RWPE1 (cell line): ENCODE measurements at regions of chr3 and their contacts with region 1.

Region 1: DNA sequence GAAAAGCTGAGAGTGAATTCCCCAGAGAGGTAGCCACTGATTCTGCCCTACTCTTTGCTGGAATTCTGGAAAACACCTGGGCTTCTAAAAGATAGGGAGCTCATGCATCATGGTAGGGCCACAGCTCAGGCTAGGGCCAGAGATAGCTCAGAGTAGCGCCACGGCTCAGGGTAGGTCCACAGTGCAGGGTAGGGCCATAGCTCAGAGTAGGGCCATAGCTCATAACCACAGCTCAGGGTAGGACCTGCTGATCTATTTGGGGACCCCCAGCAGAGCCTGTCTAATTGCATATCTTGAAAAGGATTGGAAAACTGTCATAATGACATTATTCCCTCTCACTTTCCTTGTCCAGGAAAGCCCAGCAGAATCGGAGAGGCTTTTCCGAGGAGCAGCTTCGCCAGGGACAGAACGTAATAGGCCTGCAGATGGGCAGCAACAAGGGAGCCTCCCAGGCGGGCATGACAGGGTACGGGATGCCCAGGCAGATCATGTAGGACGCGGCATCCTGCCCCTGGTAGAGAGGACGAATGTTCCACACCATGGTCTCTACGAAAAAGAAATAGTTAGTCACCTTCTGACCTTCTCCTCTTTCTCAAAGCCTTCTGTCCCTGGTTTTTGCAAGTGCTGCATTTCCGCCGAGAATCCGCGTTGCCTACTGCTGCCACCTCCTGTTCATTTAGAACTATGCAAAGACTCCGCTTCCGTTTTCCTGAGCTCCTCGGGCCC is 14.5 kb downstream of the TAGLN3 start:
- DNase-seq: peak; percentile 49
- H3K27ac ChIP-seq: no peak overlapping the region
- CTCF ChIP-seq: peak; percentile 58

Region 2: GRCh38 chr3:111989061-111989678 is 24.1 kb before region 1 on chr3:
- CTCF ChIA-PET with region 1: interaction called, 10 read pairs
- POLR2A ChIA-PET with region 1: no interaction called
- DNase-seq: no peak
- H3K27ac ChIP-seq: no peak overlapping the region
- CTCF ChIP-seq: peak; percentile 78

Region 3: GRCh38 chr3:112128843-112129727 is 115.9 kb after region 1 on chr3:
- CTCF ChIA-PET with region 1: no interaction called
- POLR2A ChIA-PET with region 1: no interaction called
- DNase-seq: peak; percentile 47
- H3K27ac ChIP-seq: no peak overlapping the region
- CTCF ChIP-seq: no peak